Activated CD8-positive, alpha-beta T cell treated with anti-CD3 and anti-CD28 coated beads for 36 hours (primary cell): ENCODE measurements at regions of chr10 and their contacts with region 1.

Region 1: DNA sequence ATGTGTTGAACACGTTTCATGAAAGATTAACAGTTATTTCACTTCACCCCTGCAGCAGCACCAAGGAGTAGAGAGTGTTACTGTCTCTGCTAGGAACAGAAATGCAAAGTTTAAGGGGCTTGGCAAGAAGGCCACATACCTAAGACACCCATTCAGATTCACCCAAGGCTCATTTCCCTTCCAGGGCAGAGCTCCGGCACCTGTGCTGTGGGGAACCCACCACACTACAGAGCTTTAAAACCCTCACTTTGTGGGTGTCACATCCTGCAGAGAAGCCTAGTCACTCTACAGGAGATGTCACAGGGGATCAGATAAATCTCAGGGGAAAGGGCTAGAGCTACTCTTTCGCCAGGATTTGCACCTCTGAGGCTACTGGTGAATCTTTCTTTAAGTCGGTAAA is 176.1 kb upstream of the KLF6 start:
- DNase-seq: peak; percentile 77
- ATAC-seq: peak; percentile 98
- H3K4me3 Mint-ChIP-seq: peak overlapping the region; percentile 18
- H3K27ac Mint-ChIP-seq: peak overlapping the region; percentile 57
- H3K4me1 Mint-ChIP-seq: peaks cover 32% of the 10 kb centered on the region
- H3K27me3 Mint-ChIP-seq: no peaks in the 10 kb centered on the region
- CTCF ChIP-seq: no peak

Region 2: GRCh38 chr10:3972460-3973301 is 11.6 kb after region 1 on chr10:
- CTCF ChIA-PET with region 1: interaction called, 10 read pairs
- POLR2A ChIA-PET with region 1: interaction called, 16 read pairs
- intact Hi-C with region 1: no loop called
- DNase-seq: peak; percentile 57
- ATAC-seq: peak; percentile 85
- H3K4me3 Mint-ChIP-seq: peak overlapping the region; percentile 58
- H3K27ac Mint-ChIP-seq: peak overlapping the region; percentile 97
- H3K4me1 Mint-ChIP-seq: peaks cover 45% of the 10 kb centered on the region
- H3K27me3 Mint-ChIP-seq: no peaks in the 10 kb centered on the region
- CTCF ChIP-seq: no peak